ENCODE measurements at regions of chr22 and their contacts with region 1.

Region 1: DNA sequence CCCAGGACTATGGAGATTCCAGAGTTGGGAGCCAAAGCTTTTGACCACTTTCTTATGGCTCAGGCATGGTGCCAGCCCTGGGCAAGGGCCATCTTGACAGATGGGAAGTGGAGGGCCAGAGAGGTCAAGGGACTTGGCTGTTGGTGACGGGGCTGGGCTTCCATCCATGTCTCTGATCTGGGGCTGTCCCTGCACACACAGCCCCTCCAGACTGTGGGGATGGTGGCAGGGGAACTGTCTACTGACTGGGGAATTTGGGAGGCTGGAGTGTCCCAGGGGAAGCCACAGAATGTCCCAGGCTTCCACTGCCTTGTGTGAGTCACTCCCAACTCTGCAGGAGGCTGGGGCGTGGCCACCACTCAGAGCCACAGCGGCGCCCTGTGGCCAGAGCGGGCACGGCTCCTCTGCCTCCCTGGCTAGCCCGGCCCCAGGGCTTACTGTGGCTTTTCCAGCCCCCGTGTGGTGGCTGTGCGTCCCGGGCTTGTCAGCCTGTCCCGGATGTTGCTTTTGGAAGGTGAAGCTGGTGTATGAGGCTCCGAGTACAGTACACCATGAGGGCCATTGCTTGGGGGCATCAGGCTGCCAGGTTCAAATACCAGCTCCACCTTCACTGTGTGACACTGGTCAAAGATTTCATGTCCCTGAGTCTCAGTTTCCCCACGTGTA is 19.6 kb downstream of the C22orf23 start:
- DNase-seq: peak; percentile 95
- H3K4me3 ChIP-seq: peak overlapping the region in 1 of 2 experiments; percentile 8; a peak in 1 of 4 replicates
- H3K27ac ChIP-seq: peak overlapping the region in 1 of 2 experiments; percentile 69; a peak in 3 of 4 replicates
- H3K4me1 ChIP-seq: peaks cover 6 to 7% of the 10 kb centered on the region in 2 experiments; a peak in 3 of 4 replicates
- H3K27me3 ChIP-seq: no peaks in the 10 kb centered on the region
- CTCF ChIP-seq: peak; percentile 93
- EP300 ChIP-seq: no peak; a peak in 1 of 4 replicates
- RAD21 ChIP-seq: peak; percentile 64

Region 2: DNA sequence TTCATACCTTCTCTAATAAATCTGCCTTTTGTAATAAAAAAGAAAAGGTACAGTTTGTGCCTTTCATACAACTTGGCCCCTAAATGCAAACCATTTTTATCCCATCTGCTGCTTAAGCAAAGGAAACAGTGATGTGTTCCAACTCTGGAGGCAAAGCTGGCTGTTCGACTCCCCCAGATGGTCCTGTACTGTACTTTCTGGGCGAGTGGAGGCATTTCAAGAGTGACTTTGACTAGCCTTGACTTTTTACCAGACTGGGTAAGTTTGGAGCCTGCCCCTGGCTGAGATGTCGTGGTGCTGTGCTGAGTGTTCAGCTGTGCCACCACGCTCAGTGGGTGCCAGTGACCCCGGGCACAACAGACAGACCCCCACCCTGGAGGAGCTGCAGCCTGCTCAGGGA is 17.5 kb before region 1 on chr22:
- CTCF ChIA-PET with region 1: interaction called, 13 read pairs
- POLR2A ChIA-PET with region 1: no interaction called
- DNase-seq: no peak
- H3K4me3 ChIP-seq: no peak overlapping the region
- H3K27ac ChIP-seq: no peak overlapping the region
- H3K4me1 ChIP-seq: no peaks in the 10 kb centered on the region
- H3K27me3 ChIP-seq: no peaks in the 10 kb centered on the region
- CTCF ChIP-seq: no peak
- EP300 ChIP-seq: no peak
- RAD21 ChIP-seq: no peak